ENCODE measurements at regions of chr1 and their contacts with region 1.

Region 1: DNA sequence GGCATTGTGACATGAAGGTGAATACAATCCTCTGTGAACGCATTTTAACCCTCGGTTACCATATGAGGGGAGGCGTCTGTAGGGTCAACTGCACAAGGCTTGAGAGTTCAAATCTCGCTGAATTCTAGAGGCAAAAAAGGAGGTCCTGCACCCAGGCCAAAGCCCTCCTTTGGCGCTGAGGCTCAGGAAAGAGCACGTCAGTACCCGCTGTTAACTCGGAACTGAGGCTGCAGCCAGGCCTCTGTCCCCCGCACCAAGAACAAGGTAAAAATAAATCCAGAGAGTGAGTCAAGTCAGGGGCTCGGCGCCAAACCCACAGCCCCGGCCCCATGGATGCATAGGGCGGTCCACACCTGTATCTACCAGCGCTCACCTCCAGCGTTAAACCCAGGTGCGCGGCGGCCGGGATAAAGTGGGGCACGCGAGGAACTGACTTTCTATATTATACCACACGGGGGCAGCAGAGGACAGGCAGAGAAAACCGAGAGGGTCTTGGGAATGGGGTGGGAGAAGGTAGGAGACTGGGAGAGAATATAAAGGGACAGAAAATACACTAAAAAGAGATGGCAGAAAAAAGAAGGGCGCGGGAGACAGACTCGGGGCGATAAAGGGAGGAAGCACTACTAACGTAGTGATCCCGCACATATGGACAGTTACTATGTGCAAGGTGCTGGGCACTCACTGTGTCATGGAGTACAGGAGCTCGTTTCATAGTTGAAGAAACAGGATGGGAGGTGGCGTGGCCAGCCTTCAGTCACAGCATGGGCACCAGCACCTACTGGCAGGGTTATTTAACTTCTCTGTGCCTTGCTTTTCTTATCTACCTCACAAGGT is 54.8 kb downstream of the DMRTA2 start:
- DNase-seq: peak; percentile 28 to 48
- ATAC-seq: peak in 1 of 3 donors; percentile 82
- H3K4me3 ChIP-seq: no peak overlapping the region
- H3K4me3 Mint-ChIP-seq: no peak overlapping the region
- H3K27ac ChIP-seq: no peak overlapping the region
- H3K27ac Mint-ChIP-seq: no peak overlapping the region
- H3K4me1 ChIP-seq: peaks cover 6% of the 10 kb centered on the region
- H3K4me1 Mint-ChIP-seq: no peaks in the 10 kb centered on the region
- H3K27me3 ChIP-seq: peaks cover 12% of the 10 kb centered on the region
- H3K27me3 Mint-ChIP-seq: peaks cover 23 to 52% of the 10 kb centered on the region in 2 donors
- CTCF ChIP-seq: peak; percentile 77

Region 2: GRCh38 chr1:50491142-50491541 is 122.7 kb after region 1 on chr1:
- intact Hi-C with region 1: no loop called
- DNase-seq: no peak
- ATAC-seq: no peak
- H3K4me3 ChIP-seq: no peak overlapping the region
- H3K4me3 Mint-ChIP-seq: peak overlapping the region; percentile 18
- H3K27ac ChIP-seq: peak overlapping the region; percentile 2
- H3K27ac Mint-ChIP-seq: peak overlapping the region; percentile 62 to 76
- H3K4me1 ChIP-seq: no peaks in the 10 kb centered on the region
- H3K4me1 Mint-ChIP-seq: peaks cover 33 to 47% of the 10 kb centered on the region in 2 donors
- H3K27me3 ChIP-seq: no peaks in the 10 kb centered on the region
- H3K27me3 Mint-ChIP-seq: no peaks in the 10 kb centered on the region
- CTCF ChIP-seq: no peak

Region 3: GRCh38 chr1:50605186-50605875 is 236.9 kb after region 1 on chr1:
- intact Hi-C with region 1: loop called (anchors 2 kb)
- DNase-seq: peak in 1 of 2 donors; percentile 22
- ATAC-seq: peak in 1 of 3 donors; percentile 31
- H3K4me3 ChIP-seq: no peak overlapping the region
- H3K4me3 Mint-ChIP-seq: no peak overlapping the region
- H3K27ac ChIP-seq: no peak overlapping the region
- H3K27ac Mint-ChIP-seq: no peak overlapping the region
- H3K4me1 ChIP-seq: no peaks in the 10 kb centered on the region
- H3K4me1 Mint-ChIP-seq: peaks cover under 1 to 6% of the 10 kb centered on the region in 2 donors
- H3K27me3 ChIP-seq: no peaks in the 10 kb centered on the region
- H3K27me3 Mint-ChIP-seq: no peaks in the 10 kb centered on the region
- CTCF ChIP-seq: peak; percentile 51

Region 4: GRCh38 chr1:50704126-50704525 is 335.7 kb after region 1 on chr1:
- intact Hi-C with region 1: loop called (anchors 1 kb)
- DNase-seq: peak in 1 of 2 donors; percentile 46
- ATAC-seq: peak; percentile 54 to 71 (median 56)
- H3K4me3 ChIP-seq: no peak overlapping the region
- H3K4me3 Mint-ChIP-seq: no peak overlapping the region
- H3K27ac ChIP-seq: no peak overlapping the region
- H3K27ac Mint-ChIP-seq: no peak overlapping the region
- H3K4me1 ChIP-seq: peaks cover 10% of the 10 kb centered on the region
- H3K4me1 Mint-ChIP-seq: peaks cover 22 to 33% of the 10 kb centered on the region in 2 donors
- H3K27me3 ChIP-seq: no peaks in the 10 kb centered on the region
- H3K27me3 Mint-ChIP-seq: no peaks in the 10 kb centered on the region
- CTCF ChIP-seq: peak; percentile 72

Region 5: DNA sequence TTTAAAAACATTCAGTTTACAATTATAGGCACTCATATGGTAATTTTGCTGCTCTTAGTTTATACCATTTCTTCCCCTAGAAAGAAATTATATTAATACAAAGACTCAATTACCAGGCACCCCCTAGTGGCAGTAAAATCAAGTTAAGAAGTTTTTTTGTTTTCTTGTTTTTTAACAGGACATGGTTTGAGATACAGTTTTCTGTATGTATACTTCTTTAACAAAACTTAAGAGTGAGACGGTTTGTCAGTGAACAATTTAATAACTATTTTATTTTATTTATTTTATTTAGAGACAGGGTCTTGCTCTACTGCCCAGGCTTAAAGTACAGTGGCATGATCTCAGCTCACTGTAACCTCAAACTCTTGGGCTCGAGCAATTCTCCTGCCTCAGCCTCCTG is 367.0 kb after region 1 on chr1:
- intact Hi-C with region 1: loop called (anchors 1 kb)
- DNase-seq: peak in 1 of 2 donors; percentile 25
- ATAC-seq: no peak
- H3K4me3 ChIP-seq: no peak overlapping the region
- H3K4me3 Mint-ChIP-seq: no peak overlapping the region
- H3K27ac ChIP-seq: no peak overlapping the region
- H3K27ac Mint-ChIP-seq: no peak overlapping the region
- H3K4me1 ChIP-seq: peaks cover 3% of the 10 kb centered on the region
- H3K4me1 Mint-ChIP-seq: peaks cover 25 to 26% of the 10 kb centered on the region in 2 donors
- H3K27me3 ChIP-seq: no peaks in the 10 kb centered on the region
- H3K27me3 Mint-ChIP-seq: no peaks in the 10 kb centered on the region
- CTCF ChIP-seq: peak; percentile 74

Measured in natural killer cell (primary cell).